SK-N-SH (cell line): ENCODE measurements at regions of chr9 and their contacts with region 1.

Region 1: GRCh38 chr9:89602978-89603766 is 1.6 kb upstream of the GADD45G start:
- DNase-seq: peak; percentile 70
- H3K4me3 ChIP-seq: peak overlapping the region; percentile 47 to 61
- H3K27ac ChIP-seq: peak overlapping the region in 1 of 2 experiments; percentile 93; a peak in 2 of 4 replicates
- H3K4me1 ChIP-seq: peaks cover 24 to 40% of the 10 kb centered on the region in 2 experiments
- H3K27me3 ChIP-seq: peaks cover 21% of the 10 kb centered on the region; the same call in 1 of the 2 replicates
- CTCF ChIP-seq: peak; percentile 92
- EP300 ChIP-seq: no peak
- RAD21 ChIP-seq: peak; percentile 98

Region 2: GRCh38 chr9:89265214-89265613 is 338.0 kb before region 1 on chr9:
- CTCF ChIA-PET with region 1: no interaction called
- POLR2A ChIA-PET with region 1: no interaction called
- DNase-seq: no peak
- H3K4me3 ChIP-seq: no peak overlapping the region
- H3K27ac ChIP-seq: no peak overlapping the region
- H3K4me1 ChIP-seq: no peaks in the 10 kb centered on the region
- H3K27me3 ChIP-seq: no peaks in the 10 kb centered on the region
- CTCF ChIP-seq: no peak
- EP300 ChIP-seq: no peak
- RAD21 ChIP-seq: no peak

Region 3: GRCh38 chr9:89295400-89295799 is 307.8 kb before region 1 on chr9:
- CTCF ChIA-PET with region 1: no interaction called
- POLR2A ChIA-PET with region 1: no interaction called
- DNase-seq: no peak
- H3K4me3 ChIP-seq: no peak overlapping the region
- H3K27ac ChIP-seq: no peak overlapping the region
- H3K4me1 ChIP-seq: no peaks in the 10 kb centered on the region
- H3K27me3 ChIP-seq: no peaks in the 10 kb centered on the region
- CTCF ChIP-seq: no peak
- EP300 ChIP-seq: no peak
- RAD21 ChIP-seq: no peak

Region 4: DNA sequence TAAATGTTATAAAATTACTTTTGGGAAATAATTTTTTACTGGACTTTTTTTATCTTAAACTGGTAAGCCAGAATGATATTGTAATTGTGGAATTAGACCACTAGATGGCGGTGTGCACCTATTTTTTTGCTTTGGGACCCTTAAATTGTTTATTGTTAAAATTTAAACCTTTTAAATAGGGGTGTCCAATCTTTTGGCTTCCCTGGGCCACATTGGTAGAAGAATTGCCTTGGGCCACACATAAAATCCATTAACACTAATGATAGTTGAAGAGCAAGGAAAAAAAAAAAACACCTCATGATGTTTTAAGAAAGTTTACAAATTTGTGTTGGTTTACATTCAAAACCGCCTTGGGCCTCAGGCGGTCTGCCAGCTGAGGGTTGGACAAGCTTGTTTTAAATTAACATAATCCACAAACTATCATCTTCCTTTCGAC is 26.8 kb before region 1 on chr9:
- CTCF ChIA-PET with region 1: interaction called, 21 read pairs
- POLR2A ChIA-PET with region 1: no interaction called
- DNase-seq: peak; percentile 37
- H3K4me3 ChIP-seq: no peak overlapping the region; a peak in 1 of 4 replicates
- H3K27ac ChIP-seq: no peak overlapping the region
- H3K4me1 ChIP-seq: no peaks in the 10 kb centered on the region
- H3K27me3 ChIP-seq: peaks cover 13% of the 10 kb centered on the region; the same call in 1 of the 2 replicates
- CTCF ChIP-seq: peak; percentile 85
- EP300 ChIP-seq: no peak
- RAD21 ChIP-seq: peak; percentile 74

Region 5: GRCh38 chr9:89738137-89738932 is 135.2 kb after region 1 on chr9:
- CTCF ChIA-PET with region 1: interaction called, 27 read pairs
- POLR2A ChIA-PET with region 1: interaction called, 27 read pairs
- DNase-seq: no peak
- H3K4me3 ChIP-seq: no peak overlapping the region
- H3K27ac ChIP-seq: no peak overlapping the region
- H3K4me1 ChIP-seq: peaks cover 0 to 10% of the 10 kb centered on the region in 2 experiments; a peak in 1 of 4 replicates
- H3K27me3 ChIP-seq: no peaks in the 10 kb centered on the region
- CTCF ChIP-seq: no peak
- EP300 ChIP-seq: no peak
- RAD21 ChIP-seq: 0 out of 2 replicates have a peak, but pooled peaks have one; percentile 21

Region 6: GRCh38 chr9:89778100-89779090 is 175.2 kb after region 1 on chr9:
- CTCF ChIA-PET with region 1: interaction called, 12 read pairs
- POLR2A ChIA-PET with region 1: interaction called, 24 read pairs
- DNase-seq: peak; percentile 82
- H3K4me3 ChIP-seq: no peak overlapping the region; a peak in 1 of 4 replicates
- H3K27ac ChIP-seq: peak overlapping the region in 1 of 2 experiments; percentile 71; a peak in 2 of 4 replicates
- H3K4me1 ChIP-seq: peaks cover 0 to 20% of the 10 kb centered on the region in 2 experiments; a peak in 1 of 4 replicates
- H3K27me3 ChIP-seq: no peaks in the 10 kb centered on the region
- CTCF ChIP-seq: no peak
- EP300 ChIP-seq: peak in 1 of 2 experiments; percentile 87; a peak in 2 of 4 replicates
- RAD21 ChIP-seq: peak; percentile 22; the same call in 1 of the 2 replicates

Region 7: GRCh38 chr9:89941875-89942274 is 338.7 kb after region 1 on chr9:
- CTCF ChIA-PET with region 1: interaction called, 15 read pairs
- POLR2A ChIA-PET with region 1: no interaction called
- DNase-seq: no peak
- H3K4me3 ChIP-seq: no peak overlapping the region
- H3K27ac ChIP-seq: no peak overlapping the region
- H3K4me1 ChIP-seq: peaks cover 0 to 11% of the 10 kb centered on the region in 2 experiments; a peak in 1 of 4 replicates
- H3K27me3 ChIP-seq: no peaks in the 10 kb centered on the region
- CTCF ChIP-seq: no peak
- EP300 ChIP-seq: no peak
- RAD21 ChIP-seq: no peak

Region 8: DNA sequence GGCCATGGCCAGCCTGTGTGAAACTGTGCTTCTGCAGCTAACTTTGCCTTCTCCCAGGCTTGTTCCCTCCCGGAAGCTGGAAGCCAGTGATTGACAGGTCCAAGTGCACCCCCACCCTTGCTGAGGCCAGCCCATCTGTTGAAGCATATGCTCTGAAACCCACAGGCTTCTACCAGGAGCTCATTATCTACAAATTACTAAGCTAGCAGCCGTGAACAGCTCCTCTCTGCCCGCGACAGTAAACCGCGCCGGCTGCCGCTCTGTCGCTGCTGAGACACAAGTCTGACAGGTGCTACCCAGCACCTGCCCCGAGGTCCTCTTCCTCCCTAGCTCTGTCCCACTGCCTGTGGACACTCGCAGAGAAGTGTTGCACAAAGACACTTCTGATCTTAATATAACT is 492.5 kb after region 1 on chr9:
- CTCF ChIA-PET with region 1: interaction called, 604 read pairs
- POLR2A ChIA-PET with region 1: interaction called, 13 read pairs
- DNase-seq: peak; percentile 43
- H3K4me3 ChIP-seq: no peak overlapping the region
- H3K27ac ChIP-seq: no peak overlapping the region
- H3K4me1 ChIP-seq: peaks cover 0 to 17% of the 10 kb centered on the region in 2 experiments; a peak in 1 of 4 replicates
- H3K27me3 ChIP-seq: no peaks in the 10 kb centered on the region
- CTCF ChIP-seq: no peak
- EP300 ChIP-seq: no peak
- RAD21 ChIP-seq: no peak

Region 9: DNA sequence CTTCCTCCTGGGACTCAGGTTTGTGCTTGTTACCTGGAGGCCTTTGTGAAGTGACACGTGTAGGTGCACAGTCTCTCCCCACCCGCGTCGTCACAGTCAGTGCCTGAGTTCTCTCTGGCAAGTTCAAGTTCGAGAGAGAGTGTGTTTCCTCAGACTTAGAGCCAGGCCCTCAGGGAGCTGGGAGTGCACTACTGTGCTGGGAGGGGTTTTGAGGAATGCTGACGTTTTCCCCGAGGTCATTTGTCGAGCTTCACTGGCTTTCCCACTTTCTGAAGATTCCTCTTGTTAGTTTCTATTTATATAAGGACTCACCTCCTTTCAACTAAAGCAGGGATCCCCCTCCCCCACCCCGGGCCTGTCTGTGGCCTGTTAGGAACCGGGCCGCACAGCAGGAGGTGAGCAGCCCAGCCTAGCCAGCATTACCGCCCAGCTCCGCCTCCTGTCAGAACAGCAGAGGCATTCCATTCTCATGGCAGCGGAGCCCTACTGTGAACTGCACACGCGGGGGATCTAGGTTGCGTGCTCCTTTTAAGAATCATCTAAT is 830.3 kb after region 1 on chr9:
- CTCF ChIA-PET with region 1: no interaction called
- POLR2A ChIA-PET with region 1: no interaction called
- DNase-seq: no peak
- H3K4me3 ChIP-seq: no peak overlapping the region
- H3K27ac ChIP-seq: no peak overlapping the region
- H3K4me1 ChIP-seq: no peaks in the 10 kb centered on the region
- H3K27me3 ChIP-seq: no peaks in the 10 kb centered on the region
- CTCF ChIP-seq: no peak
- EP300 ChIP-seq: no peak
- RAD21 ChIP-seq: no peak